Activated CD4-positive, alpha-beta T cell treated with anti-CD3 and anti-CD28 coated beads, Interleukin-2, amount 10 ng/mL, durations not matched to agents 24 days and 14 days (primary cell): ENCODE measurements at regions of chr14 and their contacts with region 1.

Region 1: DNA sequence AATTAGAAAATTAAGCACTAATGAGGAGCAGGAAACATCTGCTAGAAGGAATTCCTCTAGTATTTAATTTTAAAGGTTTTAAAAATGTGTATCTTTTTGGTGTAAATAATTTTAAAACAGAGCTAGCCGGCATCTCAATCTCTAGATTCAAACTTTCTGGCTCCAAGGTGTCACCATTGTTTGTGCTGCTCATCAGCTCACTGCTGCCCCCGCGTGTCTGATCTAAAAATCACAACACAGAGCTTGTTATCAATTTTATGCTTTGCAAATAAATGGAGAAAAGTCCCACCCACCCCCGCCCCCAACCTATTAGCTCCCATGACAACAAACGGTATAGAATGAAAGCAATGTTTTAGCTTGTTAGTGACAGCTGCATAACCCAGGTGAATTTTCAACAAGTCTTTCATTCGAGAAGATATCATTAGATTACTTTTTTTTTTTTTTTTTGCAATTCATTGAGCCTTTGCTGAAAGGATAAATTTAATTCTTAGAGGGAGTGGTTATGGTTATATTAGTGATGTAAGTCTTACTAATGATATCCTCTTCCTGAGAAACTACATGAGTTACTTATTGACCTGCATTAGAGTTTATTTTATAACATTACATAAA is 11.3 kb upstream of the ABHD12B start:
- DNase-seq: peak; percentile 96
- H3K4me3 Mint-ChIP-seq: peak overlapping the region; percentile 87
- H3K27ac Mint-ChIP-seq: peak overlapping the region; percentile 80
- H3K4me1 Mint-ChIP-seq: peaks cover 15% of the 10 kb centered on the region
- H3K27me3 Mint-ChIP-seq: peaks cover 22% of the 10 kb centered on the region

Region 2: GRCh38 chr14:50542941-50543418 is 317.6 kb before region 1 on chr14:
- intact Hi-C with region 1: loop called (anchors 2 kb)
- DNase-seq: peak; percentile 82
- H3K4me3 Mint-ChIP-seq: no peak overlapping the region
- H3K27ac Mint-ChIP-seq: no peak overlapping the region
- H3K4me1 Mint-ChIP-seq: peaks cover 8% of the 10 kb centered on the region
- H3K27me3 Mint-ChIP-seq: peaks cover 10% of the 10 kb centered on the region

Region 3: DNA sequence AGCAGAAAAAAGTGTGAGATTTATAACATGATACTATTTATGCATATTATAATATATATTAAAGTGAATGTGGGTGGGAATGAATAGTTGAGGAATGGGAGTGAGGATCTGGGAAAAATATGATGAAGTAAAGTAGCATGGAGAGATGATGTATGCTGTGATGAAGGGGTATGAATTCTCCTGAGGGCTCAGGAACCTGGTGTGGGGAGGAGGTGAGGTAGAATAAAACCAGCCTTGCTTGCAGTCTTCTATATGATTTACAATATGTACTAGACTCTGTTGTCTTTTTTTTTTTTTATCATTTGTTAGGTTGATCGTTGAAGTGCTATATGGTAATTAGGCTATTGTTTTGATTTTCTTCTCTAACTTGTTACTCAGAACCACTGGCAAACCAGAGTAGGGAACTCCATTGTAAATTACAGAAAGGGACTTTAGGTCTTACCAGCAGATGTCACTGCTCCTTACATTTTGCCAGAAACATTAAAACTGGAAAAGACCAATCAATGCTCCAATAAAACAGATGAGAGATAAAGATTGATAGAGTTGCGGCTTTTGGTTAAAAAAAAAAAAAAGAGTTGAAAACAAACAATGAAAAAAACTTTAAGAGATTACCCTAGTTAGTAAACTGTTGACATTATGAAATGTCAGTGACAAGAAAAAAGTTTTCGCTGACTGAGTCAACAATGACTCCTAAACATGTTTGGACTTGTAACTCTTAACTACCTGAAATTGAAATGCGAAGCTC is 260.7 kb before region 1 on chr14:
- intact Hi-C with region 1: loop called (anchors 5 kb)
- DNase-seq: no peak
- H3K4me3 Mint-ChIP-seq: no peak overlapping the region
- H3K27ac Mint-ChIP-seq: no peak overlapping the region
- H3K4me1 Mint-ChIP-seq: no peaks in the 10 kb centered on the region
- H3K27me3 Mint-ChIP-seq: peaks cover 4% of the 10 kb centered on the region

Region 4: GRCh38 chr14:50619556-50620141 is 240.9 kb before region 1 on chr14:
- intact Hi-C with region 1: loop called (anchors 5 kb)
- DNase-seq: peak; percentile 63
- H3K4me3 Mint-ChIP-seq: no peak overlapping the region
- H3K27ac Mint-ChIP-seq: no peak overlapping the region
- H3K4me1 Mint-ChIP-seq: no peaks in the 10 kb centered on the region
- H3K27me3 Mint-ChIP-seq: peaks cover 2% of the 10 kb centered on the region

Region 5: DNA sequence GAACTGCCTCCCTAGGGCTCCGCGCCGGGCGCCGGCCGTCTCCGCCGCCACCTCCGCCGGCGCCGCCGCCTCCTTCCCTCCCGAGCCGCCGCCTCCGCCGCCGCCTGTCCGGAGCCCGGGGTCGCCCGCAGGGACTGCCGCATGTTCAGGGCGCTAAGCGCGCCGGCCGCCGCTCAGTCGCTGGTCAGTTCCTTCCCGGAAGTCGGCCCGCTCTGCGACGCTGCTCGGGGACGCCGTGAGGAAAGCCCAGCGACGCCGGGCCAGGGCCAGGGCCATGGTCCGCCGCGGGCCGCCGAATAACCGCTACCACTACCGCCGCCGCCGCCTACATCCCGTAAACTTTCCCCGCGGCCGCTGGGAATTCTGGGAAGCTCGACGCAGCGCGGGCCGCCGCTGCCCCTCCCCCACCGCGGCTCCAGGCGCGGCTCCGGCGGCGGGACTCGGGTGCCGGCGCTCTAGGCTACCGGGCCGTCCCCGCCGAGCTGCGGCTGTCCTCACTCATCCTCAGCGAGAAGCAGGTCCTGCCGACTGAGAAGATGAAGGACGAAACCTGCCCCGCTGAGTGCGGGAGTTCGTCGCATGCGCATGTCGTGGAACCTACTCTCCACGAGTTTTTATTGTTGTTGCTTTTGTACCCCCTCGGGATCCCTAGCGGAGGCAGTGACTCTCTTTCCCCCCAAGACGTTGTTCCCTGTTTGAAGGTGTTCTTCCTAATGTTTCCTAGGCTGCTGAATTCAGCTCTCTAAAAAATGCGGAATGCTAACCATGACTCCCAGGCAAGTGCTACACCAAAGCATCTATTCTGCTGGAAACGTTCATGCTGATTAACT is 192.4 kb before region 1 on chr14 and contains the start of gene SAV1:
- intact Hi-C with region 1: loop called (anchors 1 kb)
- DNase-seq: peak; percentile 84
- H3K4me3 Mint-ChIP-seq: no peak within 1 kb of the TSS
- H3K27ac Mint-ChIP-seq: peak within 1 kb of the TSS; percentile 50
- H3K4me1 Mint-ChIP-seq: peaks cover 13% of the 10 kb centered on the region
- H3K27me3 Mint-ChIP-seq: peaks cover 2% of the 10 kb centered on the region
- total RNA-seq, gene SAV1: 9.9 and 10.8 TPM in 2 replicates

Region 6: DNA sequence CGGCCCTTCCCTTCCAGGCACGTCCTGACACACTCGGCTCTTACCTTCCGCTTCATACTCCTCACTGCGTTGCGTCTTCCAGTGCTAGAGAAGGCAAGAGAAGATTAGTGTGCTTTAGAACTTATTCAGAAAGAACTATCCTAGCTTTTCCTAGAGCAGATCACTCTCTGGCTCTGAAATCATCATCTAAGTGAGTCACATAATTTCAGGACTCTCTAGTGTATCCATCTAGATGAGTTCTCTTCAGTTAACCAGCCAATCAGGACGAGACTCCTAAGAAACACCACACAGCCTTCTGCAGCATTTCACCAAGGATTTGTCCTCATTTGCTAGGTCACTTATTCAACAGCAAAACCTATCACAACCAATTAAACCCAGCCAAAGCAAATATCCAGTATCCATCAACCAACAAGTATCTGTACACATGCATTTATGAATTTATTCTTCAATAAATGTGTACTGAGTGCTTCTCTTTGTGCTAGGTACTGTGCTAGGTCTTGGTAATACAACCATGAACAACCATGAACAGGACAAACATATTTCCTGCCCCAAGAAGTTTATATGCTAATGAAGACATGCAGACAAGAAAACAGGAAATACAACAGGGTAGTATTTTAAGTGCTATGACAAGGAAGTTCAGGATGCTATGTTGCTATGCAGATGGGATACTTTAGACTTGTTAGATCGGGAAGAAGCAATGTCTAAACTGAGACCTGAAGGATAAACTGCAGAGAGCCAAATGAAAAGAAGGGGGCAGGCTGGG is 81.7 kb before region 1 on chr14:
- intact Hi-C with region 1: loop called (anchors 1 kb)
- DNase-seq: no peak
- H3K4me3 Mint-ChIP-seq: no peak overlapping the region
- H3K27ac Mint-ChIP-seq: peak overlapping the region; percentile 37
- H3K4me1 Mint-ChIP-seq: peaks cover 24% of the 10 kb centered on the region
- H3K27me3 Mint-ChIP-seq: no peaks in the 10 kb centered on the region

Region 7: GRCh38 chr14:50830932-50831725 is 29.5 kb before region 1 on chr14 and contains the start of gene NIN:
- intact Hi-C with region 1: loop called (anchors 2 kb)
- DNase-seq: peak; percentile 93
- H3K4me3 Mint-ChIP-seq: peak within 1 kb of the TSS; percentile 90
- H3K27ac Mint-ChIP-seq: peak within 1 kb of the TSS; percentile 93
- H3K4me1 Mint-ChIP-seq: peaks cover 45% of the 10 kb centered on the region
- H3K27me3 Mint-ChIP-seq: peaks cover 12% of the 10 kb centered on the region
- total RNA-seq, gene NIN: 40.2 and 43.1 TPM in 2 replicates

Region 8: DNA sequence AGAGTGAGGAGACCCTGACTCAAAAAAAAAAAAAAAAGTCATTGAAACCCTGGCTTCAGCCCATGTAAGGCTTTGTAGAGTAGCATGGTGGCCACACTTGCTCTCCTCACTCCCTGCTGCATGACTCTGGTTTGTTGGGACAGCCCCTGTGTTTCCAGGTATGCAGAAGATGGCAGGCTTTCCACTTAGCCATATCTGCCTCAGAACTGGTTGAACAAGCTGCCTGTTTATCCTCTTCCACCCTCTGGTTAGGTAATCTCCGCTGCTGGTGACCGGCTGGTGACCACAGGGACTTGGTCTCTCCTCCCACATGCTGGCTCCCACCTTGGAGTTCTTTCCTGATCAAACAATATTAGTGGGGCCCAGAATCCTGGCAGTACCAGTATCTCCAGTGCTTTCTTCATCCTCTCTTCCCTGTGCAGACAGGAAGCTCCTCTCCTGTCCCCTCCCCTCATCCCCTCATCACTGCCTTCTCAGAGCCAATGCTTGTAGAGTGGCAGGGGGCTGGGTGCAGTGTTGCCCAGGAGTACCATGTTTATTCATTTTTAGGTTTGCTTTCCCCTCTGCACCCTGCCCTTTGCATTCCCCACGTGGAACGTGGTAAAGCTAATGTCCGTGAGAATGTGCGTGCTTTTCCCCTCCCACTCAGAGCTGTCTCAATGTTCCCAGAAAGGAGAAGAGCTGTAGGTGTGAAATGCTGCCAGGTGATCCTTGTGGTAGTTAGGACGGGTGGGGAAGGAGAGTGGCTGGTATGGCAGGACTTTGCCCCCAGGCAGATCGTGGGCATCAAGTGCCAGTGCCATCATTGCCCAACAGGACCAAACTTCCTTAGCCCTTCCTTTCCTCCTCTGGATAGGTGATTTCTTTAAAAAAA is 22.6 kb after region 1 on chr14:
- intact Hi-C with region 1: no loop called
- DNase-seq: no peak
- H3K4me3 Mint-ChIP-seq: no peak overlapping the region
- H3K27ac Mint-ChIP-seq: no peak overlapping the region
- H3K4me1 Mint-ChIP-seq: no peaks in the 10 kb centered on the region
- H3K27me3 Mint-ChIP-seq: peaks cover 62% of the 10 kb centered on the region